HEK293 (cell line): ENCODE measurements at regions of chr2 and their contacts with region 1.

Region 1: DNA sequence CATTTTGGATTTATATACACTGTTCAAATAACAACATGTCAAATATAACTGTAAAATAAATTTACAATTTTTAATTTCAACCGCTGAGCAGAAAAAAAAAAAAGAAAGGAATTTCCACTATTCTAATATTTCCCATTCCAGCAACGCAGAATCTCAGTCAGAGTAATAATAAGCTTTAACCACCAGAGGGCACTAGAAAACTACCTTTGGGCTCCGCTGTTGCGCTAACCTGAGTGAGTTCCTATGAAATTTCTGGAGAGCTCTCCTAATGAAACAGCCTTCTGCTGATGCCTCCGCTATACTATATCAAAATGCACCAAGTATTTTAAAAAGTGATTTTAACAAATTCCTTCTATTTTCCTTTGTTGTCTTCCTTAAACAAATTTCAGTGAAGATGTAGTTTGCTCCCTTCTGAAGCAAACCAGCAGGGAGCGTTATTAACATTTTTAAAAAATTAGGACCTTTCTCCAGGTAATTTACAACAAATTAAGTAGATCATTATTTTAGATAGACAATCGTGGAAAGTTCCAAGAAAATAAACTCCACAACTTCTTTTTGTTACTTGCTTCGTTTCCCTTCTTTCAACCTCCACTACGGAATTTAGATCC is 23.0 kb downstream of the ERMN start:
- H3K4me3 ChIP-seq: no peak overlapping the region
- H3K27ac ChIP-seq: no peak overlapping the region
- H3K4me1 ChIP-seq: no peaks in the 10 kb centered on the region
- CTCF ChIP-seq: peak; percentile 56

Region 2: GRCh38 chr2:156841321-156841720 is 461.3 kb before region 1 on chr2:
- CTCF ChIA-PET with region 1: no interaction called
- POLR2A ChIA-PET with region 1: no interaction called
- H3K4me3 ChIP-seq: no peak overlapping the region
- H3K27ac ChIP-seq: no peak overlapping the region
- H3K4me1 ChIP-seq: peaks cover 11% of the 10 kb centered on the region
- CTCF ChIP-seq: no peak

Region 3: GRCh38 chr2:157194097-157194688 is 108.4 kb before region 1 on chr2:
- CTCF ChIA-PET with region 1: no interaction called
- POLR2A ChIA-PET with region 1: no interaction called
- H3K4me3 ChIP-seq: no peak overlapping the region
- H3K27ac ChIP-seq: no peak overlapping the region
- H3K4me1 ChIP-seq: no peaks in the 10 kb centered on the region
- CTCF ChIP-seq: peak; percentile 31; the same call in 1 of the 2 replicates

Region 4: GRCh38 chr2:157283468-157283867 is 19.1 kb before region 1 on chr2:
- CTCF ChIA-PET with region 1: interaction called, 18 read pairs
- POLR2A ChIA-PET with region 1: no interaction called
- H3K4me3 ChIP-seq: no peak overlapping the region
- H3K27ac ChIP-seq: no peak overlapping the region
- H3K4me1 ChIP-seq: no peaks in the 10 kb centered on the region
- CTCF ChIP-seq: no peak

Region 5: GRCh38 chr2:157327621-157328500 is 25.3 kb after region 1 on chr2:
- CTCF ChIA-PET with region 1: interaction called, 37 read pairs
- POLR2A ChIA-PET with region 1: no interaction called
- H3K4me3 ChIP-seq: no peak overlapping the region
- H3K27ac ChIP-seq: no peak overlapping the region
- H3K4me1 ChIP-seq: no peaks in the 10 kb centered on the region
- CTCF ChIP-seq: peak; percentile 72

Region 6: GRCh38 chr2:157336137-157337010 is 33.8 kb after region 1 on chr2:
- CTCF ChIA-PET with region 1: interaction called, 87 read pairs
- POLR2A ChIA-PET with region 1: no interaction called
- H3K4me3 ChIP-seq: no peak overlapping the region
- H3K27ac ChIP-seq: no peak overlapping the region
- H3K4me1 ChIP-seq: no peaks in the 10 kb centered on the region
- CTCF ChIP-seq: no peak

Region 7: GRCh38 chr2:157492189-157492773 is 189.7 kb after region 1 on chr2:
- CTCF ChIA-PET with region 1: interaction called, 11 read pairs
- POLR2A ChIA-PET with region 1: no interaction called
- H3K4me3 ChIP-seq: no peak overlapping the region
- H3K27ac ChIP-seq: no peak overlapping the region
- H3K4me1 ChIP-seq: peaks cover 10% of the 10 kb centered on the region
- CTCF ChIP-seq: peak; percentile 62